Left ventricle myocardium superior (tissue), 1 donor: ENCODE measurements at regions of chr12 and their contacts with region 1.

Region 1: GRCh38 chr12:50637870-50638481 is 125.9 kb upstream of the ATF1 start:
- DNase-seq: no peak
- ATAC-seq: peak; percentile 32

Region 2: GRCh38 chr12:50504798-50505385 is 133.1 kb before region 1 on chr12 and contains the start of gene DIP2B:
- intact Hi-C with region 1: loop called (anchors 2 kb)
- DNase-seq: peak; percentile 98
- ATAC-seq: peak; percentile 95
- total RNA-seq, gene DIP2B: 11.4 TPM